ENCODE measurements at regions of chr7 and their contacts with region 1.

Region 1: GRCh38 chr7:19181634-19182033 is 36.4 kb upstream of the FERD3L start:
- DNase-seq: no peak
- H3K4me3 ChIP-seq: no peak overlapping the region
- H3K27ac ChIP-seq: no peak overlapping the region
- H3K4me1 ChIP-seq: no peaks in the 10 kb centered on the region
- H3K27me3 ChIP-seq: no peaks in the 10 kb centered on the region
- CTCF ChIP-seq: no peak
- EP300 ChIP-seq: no peak
- POLR2A ChIP-seq: no peak

Region 2: GRCh38 chr7:18257711-18258110 is 923.9 kb before region 1 on chr7:
- intact Hi-C with region 1: loop called in 1 of 4 experiments (anchors 5 kb)
- DNase-seq: no peak
- H3K4me3 ChIP-seq: no peak overlapping the region
- H3K27ac ChIP-seq: no peak overlapping the region
- H3K4me1 ChIP-seq: no peaks in the 10 kb centered on the region
- H3K27me3 ChIP-seq: no peaks in the 10 kb centered on the region
- CTCF ChIP-seq: no peak
- EP300 ChIP-seq: no peak
- POLR2A ChIP-seq: no peak

Region 3: DNA sequence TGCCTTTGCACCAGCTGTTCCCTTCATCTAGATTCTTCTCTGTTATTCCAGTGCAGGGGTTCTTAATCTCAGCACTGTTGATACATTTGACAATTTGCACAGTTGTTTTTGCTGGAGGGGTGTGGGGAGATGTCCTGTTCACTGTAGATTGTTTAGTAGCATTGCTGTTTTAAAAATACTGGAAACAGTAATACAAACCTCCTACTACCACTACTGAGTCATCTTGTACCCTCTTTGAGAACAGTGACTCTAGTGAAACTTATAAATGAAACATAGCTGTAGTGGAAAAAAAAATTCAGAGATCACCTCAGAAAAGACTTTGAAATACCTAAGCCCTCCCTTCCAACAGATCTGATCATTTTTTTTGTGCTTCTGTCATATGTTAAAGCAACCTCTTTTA is 746.6 kb after region 1 on chr7:
- intact Hi-C with region 1: no loop called
- DNase-seq: no peak
- H3K4me3 ChIP-seq: no peak overlapping the region
- H3K27ac ChIP-seq: no peak overlapping the region
- H3K4me1 ChIP-seq: no peaks in the 10 kb centered on the region
- H3K27me3 ChIP-seq: no peaks in the 10 kb centered on the region
- CTCF ChIP-seq: no peak
- EP300 ChIP-seq: no peak
- POLR2A ChIP-seq: no peak